Caco-2 (cell line): ENCODE measurements at regions of chrX and their contacts with region 1.

Region 1: DNA sequence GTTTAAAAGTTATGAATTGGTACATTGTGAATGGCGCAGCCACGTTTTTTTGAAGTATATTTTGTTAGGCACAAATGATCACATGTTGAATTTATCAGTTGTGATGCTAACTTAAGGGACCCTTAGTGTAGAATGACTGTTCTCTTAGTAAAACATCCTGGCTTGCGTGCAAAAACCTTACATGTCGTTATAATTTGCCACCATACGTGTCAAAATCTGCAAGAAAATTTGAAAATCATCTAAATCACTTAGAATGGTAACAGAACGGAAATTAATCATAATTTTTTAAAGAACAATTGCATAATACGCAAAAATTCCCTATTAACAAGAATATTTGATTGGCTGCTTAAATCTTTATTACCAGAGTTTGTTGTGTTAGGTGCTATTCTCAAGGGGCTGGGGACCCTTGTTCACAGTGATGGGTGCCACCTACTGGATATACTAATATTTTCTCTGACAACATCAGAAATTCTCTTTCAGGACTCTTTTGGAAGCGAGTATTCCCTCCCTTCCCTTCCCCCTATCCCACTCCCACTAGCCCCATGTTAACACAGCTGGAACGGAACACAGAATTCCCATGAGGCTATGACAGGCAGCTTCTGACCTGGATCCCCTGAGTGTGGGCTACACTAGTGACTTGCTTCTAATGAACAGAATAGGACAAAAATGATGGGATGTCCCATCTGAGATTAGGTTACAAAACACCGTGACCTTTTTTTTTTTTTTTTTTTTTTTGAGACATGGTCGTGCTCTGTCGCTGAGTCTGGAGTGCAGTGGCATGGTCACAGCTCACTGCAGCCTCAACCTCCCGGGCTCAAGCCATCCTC is 71.8 kb downstream of the SUPT20HL2 start:
- DNase-seq: peak in 1 of 2 experiments; percentile 37
- H3K4me3 ChIP-seq: no peak overlapping the region
- H3K4me3 Mint-ChIP-seq: no peak overlapping the region
- H3K27ac Mint-ChIP-seq: no peak overlapping the region
- H3K4me1 ChIP-seq: no peaks in the 10 kb centered on the region
- H3K4me1 Mint-ChIP-seq: no peaks in the 10 kb centered on the region
- H3K27me3 ChIP-seq: no peaks in the 10 kb centered on the region
- H3K27me3 Mint-ChIP-seq: no peaks in the 10 kb centered on the region
- CTCF ChIP-seq: peak in 1 of 2 experiments; percentile 36

Region 2: DNA sequence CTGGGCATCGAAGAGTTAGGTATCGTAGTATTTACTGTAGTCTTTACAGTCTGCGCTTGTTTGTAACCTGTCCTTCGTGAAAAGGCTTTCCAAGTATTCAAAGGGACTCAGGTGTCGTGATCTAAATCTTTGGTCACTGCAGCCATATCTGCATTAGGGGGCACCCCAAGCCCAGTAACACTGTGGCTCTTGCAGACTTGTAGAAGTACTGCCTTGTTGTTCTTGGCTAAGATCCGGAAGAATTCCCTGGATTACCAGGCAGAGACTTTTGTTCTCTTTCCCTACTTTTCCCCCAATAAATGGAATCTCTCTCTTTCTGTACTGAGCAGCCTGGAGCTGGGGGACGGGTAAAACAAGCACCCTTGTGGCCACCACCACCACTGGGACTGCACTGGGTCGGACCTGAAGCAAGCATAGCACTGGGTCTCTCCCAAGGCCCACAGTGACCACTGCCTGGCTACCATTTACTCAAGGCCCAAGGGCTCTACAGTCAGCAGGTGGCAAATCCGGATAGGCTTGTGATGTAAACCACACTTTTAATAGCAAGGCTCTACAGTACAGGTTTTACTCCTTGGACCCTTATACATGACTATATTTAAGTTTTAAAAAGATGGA is 322.2 kb before region 1 on chrX:
- CTCF ChIA-PET with region 1: no interaction called
- POLR2A ChIA-PET with region 1: no interaction called
- intact Hi-C with region 1: no loop called
- DNase-seq: peak in 1 of 2 experiments; percentile 24
- H3K4me3 ChIP-seq: no peak overlapping the region
- H3K4me3 Mint-ChIP-seq: no peak overlapping the region
- H3K27ac Mint-ChIP-seq: no peak overlapping the region
- H3K4me1 ChIP-seq: no peaks in the 10 kb centered on the region
- H3K4me1 Mint-ChIP-seq: no peaks in the 10 kb centered on the region
- H3K27me3 ChIP-seq: no peaks in the 10 kb centered on the region
- H3K27me3 Mint-ChIP-seq: no peaks in the 10 kb centered on the region
- CTCF ChIP-seq: peak in 1 of 2 experiments; percentile 31

Region 3: DNA sequence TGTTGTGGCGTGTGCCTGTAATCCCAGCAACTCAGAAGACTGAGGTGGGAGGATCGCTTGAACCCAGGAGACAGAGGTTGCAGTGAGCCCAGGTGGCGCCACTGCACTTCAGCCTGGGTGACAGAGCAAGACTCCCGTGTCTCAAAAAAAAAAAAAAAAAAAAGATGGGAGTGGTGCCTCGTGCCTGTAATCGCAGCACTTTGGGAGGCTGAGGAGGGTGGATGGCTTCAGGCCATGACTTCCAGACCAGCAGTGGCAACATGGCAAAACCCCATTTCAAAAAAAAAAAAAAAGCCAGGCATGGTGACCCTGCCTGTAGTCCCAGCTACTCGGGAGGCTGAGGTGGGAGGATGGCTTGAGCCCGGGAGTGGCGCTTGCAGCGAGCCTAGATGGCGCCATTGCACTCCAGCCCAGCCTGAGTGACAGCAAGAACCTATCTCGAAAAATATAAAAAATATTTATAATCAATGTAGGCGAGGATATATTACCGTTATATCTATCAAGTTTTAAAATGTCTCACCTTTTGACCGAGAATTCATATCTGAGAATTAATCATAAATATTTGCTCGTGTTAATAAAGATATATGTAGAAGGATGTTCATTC is 160.3 kb before region 1 on chrX:
- CTCF ChIA-PET with region 1: interaction called, 6 read pairs
- POLR2A ChIA-PET with region 1: interaction called, 8 read pairs
- intact Hi-C with region 1: loop called (anchors 1 kb)
- DNase-seq: peak; percentile 74 to 81
- H3K4me3 ChIP-seq: no peak overlapping the region
- H3K4me3 Mint-ChIP-seq: no peak overlapping the region
- H3K27ac Mint-ChIP-seq: no peak overlapping the region
- H3K4me1 ChIP-seq: no peaks in the 10 kb centered on the region
- H3K4me1 Mint-ChIP-seq: no peaks in the 10 kb centered on the region
- H3K27me3 ChIP-seq: no peaks in the 10 kb centered on the region
- H3K27me3 Mint-ChIP-seq: no peaks in the 10 kb centered on the region
- CTCF ChIP-seq: peak; percentile 17 to 54

Region 4: DNA sequence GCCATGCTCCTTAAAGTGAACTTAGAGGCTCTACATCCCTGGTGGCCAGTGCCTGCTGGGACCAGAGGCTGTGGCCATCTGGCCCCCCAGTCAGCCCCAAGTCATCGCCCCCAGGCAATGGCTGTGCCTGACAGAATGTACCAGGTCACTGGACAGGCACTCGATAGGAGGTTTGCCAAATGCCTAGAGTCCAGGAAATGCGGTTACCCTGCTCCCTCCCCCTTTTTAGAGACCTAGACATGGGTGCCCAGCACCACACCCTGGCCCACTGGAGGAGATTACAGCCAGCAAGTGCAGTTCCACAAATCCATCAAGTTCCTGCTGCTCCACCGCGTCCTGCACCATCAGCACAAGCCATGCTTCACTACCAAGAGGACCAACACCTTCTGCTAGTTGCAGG is 108.8 kb before region 1 on chrX:
- CTCF ChIA-PET with region 1: no interaction called
- POLR2A ChIA-PET with region 1: no interaction called
- intact Hi-C with region 1: no loop called
- DNase-seq: no peak
- H3K4me3 ChIP-seq: no peak overlapping the region
- H3K4me3 Mint-ChIP-seq: no peak overlapping the region
- H3K27ac Mint-ChIP-seq: no peak overlapping the region
- H3K4me1 ChIP-seq: no peaks in the 10 kb centered on the region
- H3K4me1 Mint-ChIP-seq: no peaks in the 10 kb centered on the region
- H3K27me3 ChIP-seq: no peaks in the 10 kb centered on the region
- H3K27me3 Mint-ChIP-seq: no peaks in the 10 kb centered on the region
- CTCF ChIP-seq: no peak